Dendritic cell treated with granulocyte-macrophage colony-stimulating factor and Interleukin-4, amounts not matched to agents 40 ng/mL and 50 ng/mL, for 4 days (primary cell): ENCODE measurements at regions of chr18 and their contacts with region 1.

Region 1: GRCh38 chr18:76922107-76922506 is 99.8 kb downstream of the ZNF236 start:
- H3K4me3 Mint-ChIP-seq: no peak overlapping the region
- H3K27ac Mint-ChIP-seq: peak overlapping the region; percentile 61
- H3K4me1 Mint-ChIP-seq: peaks cover 7% of the 10 kb centered on the region
- H3K27me3 Mint-ChIP-seq: no peaks in the 10 kb centered on the region

Region 2: DNA sequence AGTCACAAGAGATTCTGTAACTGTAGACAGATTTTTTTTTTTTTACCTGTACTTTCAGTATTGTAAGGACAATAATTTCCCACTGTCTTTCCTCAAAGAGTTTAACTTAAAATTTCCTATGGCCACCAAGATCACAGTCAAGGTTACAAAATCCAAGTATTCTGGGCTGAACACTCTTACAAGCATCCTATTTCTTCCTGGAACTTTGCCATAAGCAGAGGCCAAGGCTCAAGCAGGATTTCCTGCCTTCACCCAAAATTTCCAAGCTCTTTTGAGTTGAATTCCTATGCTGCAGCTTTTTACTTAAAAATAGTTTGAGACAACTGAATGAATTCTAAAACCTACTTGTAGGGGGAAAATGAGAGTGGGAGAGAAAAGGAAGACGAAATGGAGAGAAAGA is 726.5 kb before region 1 on chr18:
- intact Hi-C with region 1: no loop called
- H3K4me3 Mint-ChIP-seq: no peak overlapping the region
- H3K27ac Mint-ChIP-seq: no peak overlapping the region
- H3K4me1 Mint-ChIP-seq: no peaks in the 10 kb centered on the region
- H3K27me3 Mint-ChIP-seq: no peaks in the 10 kb centered on the region

Region 3: DNA sequence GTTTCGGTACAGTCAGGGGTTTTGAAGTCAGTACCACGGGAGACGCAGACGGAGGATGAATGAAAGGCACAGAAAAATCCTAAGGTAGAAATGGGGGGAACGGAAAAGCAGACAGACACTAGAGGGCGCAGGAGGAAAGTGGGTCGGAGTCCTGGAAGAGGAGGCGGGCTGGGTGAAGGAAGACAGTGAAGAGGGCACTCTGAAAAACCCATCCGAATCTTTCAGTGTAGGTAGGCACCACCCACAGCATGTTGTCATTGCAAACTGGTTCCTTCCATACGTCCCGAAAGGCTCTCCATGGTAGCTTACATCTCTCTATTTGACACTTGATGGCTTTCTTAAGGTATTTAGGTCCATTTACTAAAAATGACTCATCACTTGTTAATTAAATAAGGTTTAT is 118.3 kb before region 1 on chr18:
- intact Hi-C with region 1: loop called (anchors 5 kb)
- H3K4me3 Mint-ChIP-seq: no peak overlapping the region
- H3K27ac Mint-ChIP-seq: no peak overlapping the region
- H3K4me1 Mint-ChIP-seq: peaks cover 16% of the 10 kb centered on the region
- H3K27me3 Mint-ChIP-seq: peaks cover 23% of the 10 kb centered on the region

Region 4: DNA sequence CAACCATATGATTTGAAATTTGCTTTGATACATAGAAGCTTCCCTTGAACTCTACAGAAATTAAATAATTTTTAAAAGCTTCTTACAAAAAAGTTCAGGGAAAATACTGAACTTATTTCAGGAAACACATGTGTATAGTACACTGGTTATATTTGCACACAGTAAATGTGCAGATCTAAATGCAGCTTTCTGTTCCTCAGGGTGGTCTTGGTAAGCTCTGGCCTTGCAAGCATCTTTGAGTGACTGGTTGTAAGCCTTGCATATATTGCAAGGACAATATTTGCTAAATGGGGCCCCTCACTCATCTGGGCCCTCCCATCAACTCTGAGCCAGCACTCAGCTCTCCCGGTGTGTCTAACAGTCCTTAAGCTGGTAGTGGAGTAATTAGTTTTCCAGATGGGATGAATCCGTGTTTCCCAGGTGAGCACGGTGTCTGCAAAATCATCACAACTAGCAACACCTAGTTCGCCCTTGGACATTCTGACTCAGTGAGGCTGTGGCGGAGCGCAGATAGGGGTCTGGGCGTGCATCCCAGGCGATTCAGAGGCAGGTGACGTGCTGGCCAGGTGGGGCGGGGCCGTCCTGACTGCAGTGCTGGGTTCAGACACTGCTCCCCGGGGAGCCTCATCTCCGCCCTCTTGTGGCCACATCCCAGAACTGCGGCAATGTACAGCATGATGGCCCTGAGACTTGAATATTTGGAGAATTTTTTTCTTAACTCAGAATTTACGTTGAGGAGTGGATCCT is 60.9 kb after region 1 on chr18:
- intact Hi-C with region 1: loop called (anchors 10 kb)
- H3K4me3 Mint-ChIP-seq: no peak overlapping the region
- H3K27ac Mint-ChIP-seq: no peak overlapping the region
- H3K4me1 Mint-ChIP-seq: peaks cover 30% of the 10 kb centered on the region
- H3K27me3 Mint-ChIP-seq: no peaks in the 10 kb centered on the region

Region 5: DNA sequence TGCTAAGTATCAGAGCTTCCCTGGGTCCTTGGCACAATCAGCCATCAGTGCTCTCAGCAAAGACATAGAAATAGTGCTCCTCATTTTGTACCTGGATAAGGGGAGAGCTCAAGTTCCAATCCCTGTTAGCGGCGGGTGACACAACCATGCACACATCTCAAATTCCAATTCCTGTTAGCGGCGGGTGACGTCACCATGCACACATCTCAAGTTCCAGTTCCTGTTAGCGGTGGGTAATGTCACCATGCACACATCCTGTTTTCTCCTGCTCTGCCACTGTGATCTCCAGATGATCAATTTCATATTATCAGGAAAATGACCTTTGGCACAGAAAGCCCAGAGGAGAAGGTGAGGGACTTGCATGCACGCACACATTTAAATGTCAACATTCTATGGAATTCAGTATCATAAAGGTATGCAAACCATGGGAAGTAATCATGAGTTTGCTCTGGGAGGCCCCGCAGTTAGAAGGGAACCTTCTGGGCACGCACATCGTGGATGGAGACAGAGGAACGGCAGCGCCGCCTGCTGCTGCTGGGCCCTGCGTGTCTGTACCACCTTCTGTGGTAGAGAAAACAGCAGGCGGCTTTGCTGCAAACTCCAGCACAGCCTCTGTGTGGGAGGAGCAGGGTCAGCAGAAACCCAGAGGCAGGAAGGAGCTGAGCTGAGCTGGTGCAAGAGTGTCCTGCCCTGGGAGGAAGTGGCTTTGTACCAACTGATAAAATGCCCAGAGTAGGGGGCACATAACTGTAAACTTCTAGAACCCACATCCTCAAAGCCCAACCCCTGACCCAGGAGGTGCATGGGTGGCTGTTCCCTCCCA is 132.7 kb after region 1 on chr18:
- intact Hi-C with region 1: loop called (anchors 5 kb)
- H3K4me3 Mint-ChIP-seq: peak overlapping the region; percentile 66
- H3K27ac Mint-ChIP-seq: peak overlapping the region; percentile 97
- H3K4me1 Mint-ChIP-seq: peaks cover 73% of the 10 kb centered on the region
- H3K27me3 Mint-ChIP-seq: no peaks in the 10 kb centered on the region

Region 6: GRCh38 chr18:77207540-77207939 is 285.4 kb after region 1 on chr18:
- intact Hi-C with region 1: loop called (anchors 5 kb)
- H3K4me3 Mint-ChIP-seq: no peak overlapping the region
- H3K27ac Mint-ChIP-seq: peak overlapping the region; percentile 63
- H3K4me1 Mint-ChIP-seq: peaks cover 53% of the 10 kb centered on the region
- H3K27me3 Mint-ChIP-seq: peaks cover 5% of the 10 kb centered on the region

Region 7: DNA sequence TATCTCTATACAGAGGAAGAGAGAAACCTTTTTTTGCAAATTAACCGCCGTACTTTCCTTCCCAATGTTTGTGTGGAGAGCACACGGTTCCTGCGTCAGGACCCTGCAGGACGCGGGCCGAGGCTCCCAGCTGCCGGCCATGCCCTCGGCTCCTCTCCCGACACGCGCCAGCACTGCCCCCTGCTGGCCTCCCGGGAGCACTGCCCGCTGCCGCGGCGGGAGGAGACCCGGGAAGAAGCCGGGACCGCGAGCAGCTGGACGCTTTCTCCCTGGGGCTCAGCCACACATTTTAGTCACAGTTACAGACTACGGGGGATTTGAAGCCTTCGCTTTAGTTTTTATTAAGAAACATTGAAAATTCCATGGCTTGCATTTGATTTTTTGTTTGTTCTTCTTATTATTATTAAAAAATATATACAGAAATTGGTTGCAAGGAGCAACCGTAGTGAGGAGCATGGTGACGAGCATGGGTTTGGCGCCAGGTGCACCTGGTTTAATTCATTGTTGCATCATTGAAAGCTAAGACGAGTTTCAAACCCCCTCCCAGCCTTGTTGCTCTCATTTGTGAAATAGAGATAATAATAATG is 728.8 kb after region 1 on chr18:
- intact Hi-C with region 1: loop called (anchors 2 kb)
- H3K4me3 Mint-ChIP-seq: no peak overlapping the region
- H3K27ac Mint-ChIP-seq: no peak overlapping the region
- H3K4me1 Mint-ChIP-seq: peaks cover 4% of the 10 kb centered on the region
- H3K27me3 Mint-ChIP-seq: peaks cover 3% of the 10 kb centered on the region